ENCODE measurements at regions of chr4 and their contacts with region 1.

Region 1: DNA sequence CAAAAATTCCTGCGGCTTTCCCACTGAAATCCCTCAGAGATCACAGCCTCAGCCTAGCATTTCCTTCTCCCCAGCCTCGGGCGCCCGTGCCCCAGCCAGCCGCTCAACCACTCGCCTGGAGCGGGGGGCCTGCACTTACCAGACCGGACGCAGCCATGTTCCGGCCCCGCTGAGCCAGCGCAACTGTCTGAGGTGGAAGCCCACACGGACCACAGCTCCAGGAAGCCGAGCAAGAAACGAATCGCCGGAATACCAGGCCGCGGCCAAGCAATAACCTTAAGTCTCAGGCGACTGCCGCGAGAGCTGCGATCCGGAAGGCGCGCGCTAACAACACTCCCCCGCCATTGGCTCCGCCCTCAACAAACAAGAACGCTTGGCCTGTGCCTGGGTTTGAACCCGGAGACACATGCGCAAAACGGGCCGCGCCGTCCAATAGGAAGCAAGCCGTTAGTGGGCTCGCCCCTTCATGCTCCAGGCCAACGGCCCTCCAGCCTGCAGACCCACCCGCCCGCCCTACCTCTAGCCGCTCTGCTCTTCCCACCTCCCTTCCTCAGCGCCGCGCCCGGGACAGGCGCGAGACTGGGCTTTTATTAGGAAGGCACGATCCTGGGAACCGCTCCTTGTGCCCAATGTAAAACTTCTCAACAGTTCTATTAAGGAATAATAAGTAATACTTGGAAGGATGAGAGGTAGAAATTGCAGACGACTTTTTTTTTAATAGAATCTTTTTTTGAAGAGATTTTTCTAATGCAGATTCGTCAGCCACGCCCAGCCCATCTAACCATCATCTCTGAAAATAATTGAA is at the start of gene CENPC:
- DNase-seq: peak; percentile 91
- ATAC-seq: peak; percentile 97
- H3K4me3 ChIP-seq: peak within 1 kb of the TSS; percentile 95
- H3K27ac ChIP-seq: peak within 1 kb of the TSS; percentile 68
- H3K4me1 ChIP-seq: no peaks in the 10 kb centered on the region; the same call in 1 of the 2 replicates
- H3K27me3 ChIP-seq: no peaks in the 10 kb centered on the region
- CTCF ChIP-seq: no peak
- EP300 ChIP-seq: 0 out of 4 replicates have a peak, but pooled peaks of 1 of the 2 experiments have one; percentile 5
- POLR2A ChIP-seq: peak; percentile 99
- RAD21 ChIP-seq: no peak
- polyA plus RNA-seq, gene CENPC: 13.1 to 15.2 TPM

Region 2: DNA sequence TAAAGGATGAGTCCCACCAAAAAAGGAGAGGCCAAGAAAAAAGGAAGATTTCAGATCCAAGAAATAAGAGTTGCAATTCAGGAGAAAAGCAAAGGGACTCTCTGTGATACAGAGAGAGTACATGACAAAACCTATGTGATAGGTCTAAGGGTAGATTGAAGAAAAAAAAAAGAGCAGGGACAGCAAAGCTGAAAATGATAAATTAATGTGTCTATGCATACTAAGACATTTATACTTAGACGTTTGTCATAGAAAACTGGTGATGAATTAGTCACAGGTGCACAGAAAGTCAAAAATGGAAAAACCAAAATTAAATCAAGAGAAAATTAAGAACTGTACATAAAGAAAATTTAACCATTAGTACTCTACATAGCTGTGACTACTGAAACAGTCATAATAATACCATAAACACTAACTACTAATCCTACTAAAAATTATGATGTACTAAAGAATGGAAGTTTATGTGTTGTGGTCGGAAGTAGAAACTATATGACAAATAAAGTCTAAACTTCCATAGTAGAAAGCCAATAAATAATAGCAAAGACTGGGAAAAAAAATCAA is 10.0 kb before region 1 on chr4:
- CTCF ChIA-PET with region 1: interaction called, 7 read pairs
- POLR2A ChIA-PET with region 1: interaction called, 3 read pairs
- RAD21 ChIA-PET with region 1: interaction called, 3 read pairs
- SMC1A ChIA-PET with region 1: interaction called, 11 read pairs
- in situ Hi-C with region 1: no loop called
- intact Hi-C with region 1: no loop called
- DNase-seq: no peak
- ATAC-seq: no peak
- H3K4me3 ChIP-seq: no peak overlapping the region
- H3K27ac ChIP-seq: no peak overlapping the region
- H3K4me1 ChIP-seq: no peaks in the 10 kb centered on the region
- H3K27me3 ChIP-seq: no peaks in the 10 kb centered on the region
- CTCF ChIP-seq: no peak
- EP300 ChIP-seq: no peak
- POLR2A ChIP-seq: no peak
- RAD21 ChIP-seq: no peak

Region 3: GRCh38 chr4:67575232-67575888 is 30.0 kb after region 1 on chr4:
- CTCF ChIA-PET with region 1: interaction called, 11 read pairs
- POLR2A ChIA-PET with region 1: interaction called, 5 read pairs
- RAD21 ChIA-PET with region 1: interaction called, 11 read pairs
- SMC1A ChIA-PET with region 1: interaction called, 22 read pairs
- in situ Hi-C with region 1: no loop called
- intact Hi-C with region 1: loop called (anchors 2 kb)
- DNase-seq: peak; percentile 85
- ATAC-seq: peak; percentile 91
- H3K4me3 ChIP-seq: peak overlapping the region; percentile 56
- H3K27ac ChIP-seq: peak overlapping the region; percentile 67
- H3K4me1 ChIP-seq: peaks cover 19% of the 10 kb centered on the region
- H3K27me3 ChIP-seq: no peaks in the 10 kb centered on the region
- CTCF ChIP-seq: no peak
- EP300 ChIP-seq: peak in 1 of 2 experiments; percentile 77; a peak in 2 of 4 replicates
- POLR2A ChIP-seq: no peak
- RAD21 ChIP-seq: no peak

Region 4: GRCh38 chr4:67624939-67625338 is 79.5 kb after region 1 on chr4:
- CTCF ChIA-PET with region 1: interaction called, 14 read pairs
- POLR2A ChIA-PET with region 1: interaction called, 3 read pairs
- RAD21 ChIA-PET with region 1: interaction called, 5 read pairs
- SMC1A ChIA-PET with region 1: interaction called, 9 read pairs
- in situ Hi-C with region 1: no loop called
- intact Hi-C with region 1: loop called (anchors 5 kb)
- DNase-seq: no peak
- ATAC-seq: no peak
- H3K4me3 ChIP-seq: no peak overlapping the region
- H3K27ac ChIP-seq: no peak overlapping the region
- H3K4me1 ChIP-seq: no peaks in the 10 kb centered on the region
- H3K27me3 ChIP-seq: no peaks in the 10 kb centered on the region
- CTCF ChIP-seq: no peak; a peak in 1 of 6 replicates
- EP300 ChIP-seq: no peak
- POLR2A ChIP-seq: no peak
- RAD21 ChIP-seq: 0 out of 2 replicates have a peak, but pooled peaks have one; percentile 18

Region 5: DNA sequence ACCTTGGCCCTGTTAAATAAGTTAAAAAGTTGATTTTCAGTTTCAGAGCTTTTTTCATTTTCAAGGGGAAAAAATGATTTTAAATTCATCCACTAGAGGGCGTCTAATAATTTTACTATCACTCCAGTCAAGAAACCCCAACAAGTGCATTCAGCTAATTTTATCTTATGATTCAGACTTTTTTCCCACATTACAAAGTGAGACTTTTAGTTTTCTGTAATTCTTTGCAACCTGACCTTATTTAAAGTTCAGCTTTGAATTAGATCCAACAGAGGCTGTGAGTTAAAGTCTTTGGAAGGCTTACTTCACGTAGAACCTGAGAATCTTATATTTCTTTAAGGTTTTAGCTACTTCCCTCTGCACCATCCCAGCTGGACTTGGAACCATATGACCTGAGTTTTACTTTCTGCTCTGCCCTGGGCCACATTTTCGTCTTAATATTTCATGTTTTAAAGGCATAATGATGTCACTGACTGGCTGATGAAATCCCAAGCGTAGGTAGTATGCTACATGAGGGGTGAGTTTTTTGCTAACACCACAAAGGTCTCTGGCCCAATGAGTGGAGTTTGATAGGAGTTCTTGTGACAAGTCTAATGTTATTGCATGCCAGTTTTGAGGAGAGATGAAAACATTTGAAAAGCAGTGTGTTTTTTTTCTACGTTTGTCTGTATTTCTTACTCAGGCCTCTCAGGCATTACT is 201.5 kb after region 1 on chr4:
- CTCF ChIA-PET with region 1: interaction called, 60 read pairs
- POLR2A ChIA-PET with region 1: no interaction called
- RAD21 ChIA-PET with region 1: interaction called, 8 read pairs
- SMC1A ChIA-PET with region 1: interaction called, 17 read pairs
- in situ Hi-C with region 1: no loop called
- intact Hi-C with region 1: loop called (anchors 2 kb)
- DNase-seq: peak; percentile 13
- ATAC-seq: peak; percentile 56
- H3K4me3 ChIP-seq: no peak overlapping the region
- H3K27ac ChIP-seq: no peak overlapping the region
- H3K4me1 ChIP-seq: no peaks in the 10 kb centered on the region
- H3K27me3 ChIP-seq: no peaks in the 10 kb centered on the region
- CTCF ChIP-seq: peak in 2 of 3 experiments; percentile 51 to 52; a peak in 3 of 6 replicates
- EP300 ChIP-seq: no peak
- POLR2A ChIP-seq: no peak
- RAD21 ChIP-seq: peak; percentile 43; the same call in 1 of the 2 replicates

Region 6: GRCh38 chr4:67896421-67897065 is 351.1 kb after region 1 on chr4:
- CTCF ChIA-PET with region 1: no interaction called
- POLR2A ChIA-PET with region 1: no interaction called
- RAD21 ChIA-PET with region 1: no interaction called
- SMC1A ChIA-PET with region 1: no interaction called
- in situ Hi-C with region 1: loop called (anchors 5 kb)
- intact Hi-C with region 1: no loop called
- DNase-seq: no peak
- ATAC-seq: no peak
- H3K4me3 ChIP-seq: no peak overlapping the region
- H3K27ac ChIP-seq: no peak overlapping the region
- H3K4me1 ChIP-seq: no peaks in the 10 kb centered on the region
- H3K27me3 ChIP-seq: no peaks in the 10 kb centered on the region
- CTCF ChIP-seq: no peak
- EP300 ChIP-seq: no peak
- POLR2A ChIP-seq: no peak
- RAD21 ChIP-seq: no peak

Region 7: GRCh38 chr4:68175562-68176155 is 630.3 kb after region 1 on chr4:
- CTCF ChIA-PET with region 1: interaction called, 8 read pairs
- POLR2A ChIA-PET with region 1: no interaction called
- RAD21 ChIA-PET with region 1: no interaction called
- SMC1A ChIA-PET with region 1: interaction called, 7 read pairs
- in situ Hi-C with region 1: loop called (anchors 10 kb)
- intact Hi-C with region 1: loop called (anchors 5 kb)
- DNase-seq: peak; percentile 20
- ATAC-seq: peak; percentile 88
- H3K4me3 ChIP-seq: no peak overlapping the region
- H3K27ac ChIP-seq: no peak overlapping the region
- H3K4me1 ChIP-seq: no peaks in the 10 kb centered on the region
- H3K27me3 ChIP-seq: no peaks in the 10 kb centered on the region
- CTCF ChIP-seq: peak; percentile 55 to 73 (median 67)
- EP300 ChIP-seq: no peak
- POLR2A ChIP-seq: no peak
- RAD21 ChIP-seq: peak; percentile 90